ENCODE measurements at regions of chr10 and their contacts with region 1.

Region 1: GRCh38 chr10:112137154-112137987 is 46.2 kb downstream of the GPAM start:
- DNase-seq: peak; percentile 63
- ATAC-seq: peak; percentile 12 to 74

Region 2: GRCh38 chr10:111076191-111076681 is 1061.1 kb before region 1 on chr10:
- intact Hi-C with region 1: loop called in 1 of 2 experiments (anchors 10 kb)
- DNase-seq: peak; percentile 57
- ATAC-seq: peak; percentile 72 to 86

Region 3: DNA sequence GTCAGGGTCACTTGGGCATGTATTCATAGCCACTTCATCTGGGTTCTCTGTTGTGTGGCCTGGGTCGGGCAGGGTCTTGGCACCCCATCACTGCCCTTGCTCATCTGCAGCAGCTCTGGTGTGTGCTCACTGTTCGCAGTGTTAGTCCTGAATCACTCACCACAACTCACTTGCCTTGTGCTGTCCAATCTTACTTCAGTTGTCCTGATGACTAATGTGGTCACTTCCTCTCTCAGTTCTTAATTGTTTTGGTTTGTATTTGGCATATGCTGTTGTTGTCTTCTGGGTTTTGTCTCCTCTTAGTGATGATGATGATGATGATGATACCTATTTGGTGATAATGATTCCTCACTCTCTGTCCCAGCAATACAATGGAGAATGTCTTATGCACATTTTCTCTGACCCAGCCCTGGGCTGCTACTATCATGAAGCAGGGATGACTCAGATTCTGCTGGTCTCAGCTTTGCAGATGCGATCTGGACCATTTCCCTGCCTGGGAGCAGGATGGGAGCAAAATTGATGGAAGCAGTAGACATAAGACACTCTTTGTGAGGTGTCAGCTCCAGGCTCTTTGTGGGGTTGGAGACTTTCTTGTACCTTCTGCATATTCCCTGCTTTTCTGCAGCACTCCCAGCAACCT is 1043.5 kb before region 1 on chr10:
- intact Hi-C with region 1: loop called in 1 of 2 experiments (anchors 10 kb)
- DNase-seq: no peak
- ATAC-seq: no peak

Region 4: DNA sequence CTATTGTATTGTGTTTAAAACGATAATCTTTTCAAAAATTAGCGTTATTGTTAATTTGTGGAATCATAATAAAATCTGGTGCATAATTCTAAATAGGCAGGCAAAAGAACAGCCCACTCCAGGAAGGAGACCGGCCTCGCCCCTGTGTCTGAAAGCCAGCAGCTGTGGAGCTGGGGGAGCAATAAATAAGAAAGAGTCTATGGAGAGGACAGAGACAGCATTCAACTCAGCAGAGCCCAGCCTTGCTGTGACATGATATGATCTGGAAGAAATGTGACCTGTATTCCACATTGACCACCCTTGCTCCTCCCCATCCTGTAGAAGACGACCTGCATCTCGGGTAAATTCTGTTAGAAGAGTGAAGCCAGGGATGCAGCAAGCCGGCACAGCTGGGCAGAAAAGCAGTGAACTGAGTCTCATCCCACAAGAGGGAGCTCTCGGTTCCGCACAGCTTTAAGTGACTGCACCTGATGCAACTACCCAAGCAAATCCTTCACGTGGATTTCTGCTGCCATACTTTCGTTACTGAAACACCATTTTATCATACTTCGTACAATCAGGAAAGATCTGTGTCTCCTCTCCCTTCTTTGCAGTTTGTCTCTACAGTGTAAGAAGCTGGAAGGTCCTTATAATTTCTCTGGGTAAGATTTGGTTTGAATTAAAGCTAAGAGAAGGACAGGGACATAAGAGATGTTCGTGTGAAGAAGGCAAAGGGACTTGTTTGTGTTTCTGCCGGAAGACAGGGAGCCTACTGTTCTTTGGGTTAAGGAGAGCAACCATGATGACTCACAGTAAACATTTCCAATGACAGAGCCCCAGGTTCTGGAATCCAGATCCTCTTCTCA is 380.9 kb before region 1 on chr10:
- intact Hi-C with region 1: loop called (anchors 10 kb)
- DNase-seq: peak; percentile 18
- ATAC-seq: peak in 1 of 2 donors; percentile 51

Region 5: GRCh38 chr10:111811515-111811914 is 325.9 kb before region 1 on chr10:
- intact Hi-C with region 1: no loop called
- DNase-seq: no peak
- ATAC-seq: no peak

Region 6: GRCh38 chr10:112295853-112296830 is 158.8 kb after region 1 on chr10:
- intact Hi-C with region 1: no loop called
- DNase-seq: peak; percentile 35
- ATAC-seq: peak; percentile 80 to 88